ENCODE measurements at regions of chr10 and their contacts with region 1.

Region 1: GRCh38 chr10:86376852-86377796 is 10.5 kb upstream of the GRID1 start:
- DNase-seq: peak; percentile 64
- H3K4me3 ChIP-seq: no peak overlapping the region
- H3K27ac ChIP-seq: no peak overlapping the region
- H3K4me1 ChIP-seq: no peaks in the 10 kb centered on the region
- H3K27me3 ChIP-seq: peaks cover 10% of the 10 kb centered on the region
- CTCF ChIP-seq: peak; percentile 80

Region 2: GRCh38 chr10:84845624-84846261 is 1531.4 kb before region 1 on chr10:
- CTCF ChIA-PET with region 1: no interaction called
- POLR2A ChIA-PET with region 1: no interaction called
- intact Hi-C with region 1: loop called (anchors 5 kb)
- DNase-seq: peak; percentile 39
- H3K4me3 ChIP-seq: no peak overlapping the region
- H3K27ac ChIP-seq: no peak overlapping the region
- H3K4me1 ChIP-seq: no peaks in the 10 kb centered on the region
- H3K27me3 ChIP-seq: peaks cover 8% of the 10 kb centered on the region
- CTCF ChIP-seq: peak; percentile 51

Region 3: GRCh38 chr10:85548034-85548433 is 829.1 kb before region 1 on chr10:
- CTCF ChIA-PET with region 1: no interaction called
- POLR2A ChIA-PET with region 1: no interaction called
- intact Hi-C with region 1: loop called (anchors 5 kb)
- DNase-seq: peak; percentile 57
- H3K4me3 ChIP-seq: no peak overlapping the region
- H3K27ac ChIP-seq: no peak overlapping the region
- H3K4me1 ChIP-seq: no peaks in the 10 kb centered on the region
- H3K27me3 ChIP-seq: peaks cover 19% of the 10 kb centered on the region
- CTCF ChIP-seq: peak; percentile 46

Region 4: DNA sequence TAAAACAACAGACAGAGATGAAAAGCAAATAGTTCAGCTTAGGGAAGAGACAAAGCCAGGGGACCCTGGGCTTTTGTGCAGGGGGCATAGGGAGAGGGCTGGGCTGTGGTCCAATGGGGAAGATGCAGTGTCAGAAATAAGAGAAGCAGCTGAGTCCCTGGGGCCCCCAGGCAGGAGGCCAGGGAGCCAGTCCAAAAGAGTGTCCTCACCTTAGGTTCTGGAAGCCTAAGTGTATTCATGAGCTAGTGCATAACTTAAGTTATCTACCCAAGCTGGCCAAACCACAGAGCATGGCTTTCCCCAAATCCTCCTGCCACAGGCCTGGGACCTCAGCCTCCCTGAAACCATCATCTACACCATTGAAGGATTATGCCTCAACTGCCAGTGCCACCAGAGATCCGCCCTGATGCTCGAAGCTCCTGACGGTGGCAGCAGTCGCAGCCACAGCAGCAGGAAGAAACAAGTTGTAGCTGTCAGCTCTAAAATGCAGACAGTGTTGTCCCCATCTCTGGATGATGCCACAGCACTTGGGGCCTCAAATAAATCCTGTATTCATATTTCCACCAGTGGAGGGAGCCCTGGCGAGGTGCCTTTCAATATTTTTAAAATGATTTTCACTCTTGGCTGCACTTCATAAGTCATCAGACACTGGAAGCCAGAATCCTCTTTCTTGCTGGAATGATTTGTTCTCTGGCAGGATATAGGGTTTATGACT is 585.1 kb before region 1 on chr10:
- CTCF ChIA-PET with region 1: no interaction called
- POLR2A ChIA-PET with region 1: no interaction called
- intact Hi-C with region 1: loop called (anchors 10 kb)
- DNase-seq: peak; percentile 19
- H3K4me3 ChIP-seq: no peak overlapping the region
- H3K27ac ChIP-seq: no peak overlapping the region
- H3K4me1 ChIP-seq: no peaks in the 10 kb centered on the region
- H3K27me3 ChIP-seq: no peaks in the 10 kb centered on the region
- CTCF ChIP-seq: peak; percentile 40; the same call in 1 of the 2 replicates

Region 5: GRCh38 chr10:85995791-85996190 is 381.3 kb before region 1 on chr10:
- CTCF ChIA-PET with region 1: no interaction called
- POLR2A ChIA-PET with region 1: no interaction called
- intact Hi-C with region 1: loop called (anchors 2 kb)
- DNase-seq: peak; percentile 50
- H3K4me3 ChIP-seq: no peak overlapping the region
- H3K27ac ChIP-seq: no peak overlapping the region
- H3K4me1 ChIP-seq: no peaks in the 10 kb centered on the region
- H3K27me3 ChIP-seq: peaks cover 38% of the 10 kb centered on the region
- CTCF ChIP-seq: peak; percentile 62

Region 6: DNA sequence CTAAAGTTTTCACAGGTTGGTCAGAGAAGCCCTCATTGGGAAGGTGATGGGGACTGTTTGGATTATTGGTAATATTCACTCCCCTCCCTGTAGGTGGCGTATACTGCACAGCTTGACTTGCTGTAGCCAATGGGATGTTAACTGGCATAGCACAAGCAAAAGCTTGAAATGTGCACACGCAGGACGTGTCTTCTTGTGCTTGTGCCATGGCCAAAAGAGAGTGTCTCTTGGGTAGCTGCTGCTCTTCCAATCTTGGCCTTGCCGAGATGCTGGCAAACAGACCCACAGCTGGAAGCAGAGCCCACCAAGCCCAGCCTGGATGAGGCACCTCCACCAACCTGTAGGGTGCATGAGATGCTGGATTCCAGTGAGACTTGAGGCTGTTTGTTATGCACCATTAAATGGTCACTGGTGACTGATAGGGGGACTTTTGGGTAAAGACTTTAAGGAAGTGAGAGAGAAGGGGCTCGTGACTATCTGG is 276.5 kb before region 1 on chr10:
- CTCF ChIA-PET with region 1: no interaction called
- POLR2A ChIA-PET with region 1: no interaction called
- intact Hi-C with region 1: loop called (anchors 2 kb)
- DNase-seq: peak; percentile 55
- H3K4me3 ChIP-seq: no peak overlapping the region
- H3K27ac ChIP-seq: no peak overlapping the region
- H3K4me1 ChIP-seq: no peaks in the 10 kb centered on the region
- H3K27me3 ChIP-seq: peaks cover 5% of the 10 kb centered on the region
- CTCF ChIP-seq: peak; percentile 69

Region 7: DNA sequence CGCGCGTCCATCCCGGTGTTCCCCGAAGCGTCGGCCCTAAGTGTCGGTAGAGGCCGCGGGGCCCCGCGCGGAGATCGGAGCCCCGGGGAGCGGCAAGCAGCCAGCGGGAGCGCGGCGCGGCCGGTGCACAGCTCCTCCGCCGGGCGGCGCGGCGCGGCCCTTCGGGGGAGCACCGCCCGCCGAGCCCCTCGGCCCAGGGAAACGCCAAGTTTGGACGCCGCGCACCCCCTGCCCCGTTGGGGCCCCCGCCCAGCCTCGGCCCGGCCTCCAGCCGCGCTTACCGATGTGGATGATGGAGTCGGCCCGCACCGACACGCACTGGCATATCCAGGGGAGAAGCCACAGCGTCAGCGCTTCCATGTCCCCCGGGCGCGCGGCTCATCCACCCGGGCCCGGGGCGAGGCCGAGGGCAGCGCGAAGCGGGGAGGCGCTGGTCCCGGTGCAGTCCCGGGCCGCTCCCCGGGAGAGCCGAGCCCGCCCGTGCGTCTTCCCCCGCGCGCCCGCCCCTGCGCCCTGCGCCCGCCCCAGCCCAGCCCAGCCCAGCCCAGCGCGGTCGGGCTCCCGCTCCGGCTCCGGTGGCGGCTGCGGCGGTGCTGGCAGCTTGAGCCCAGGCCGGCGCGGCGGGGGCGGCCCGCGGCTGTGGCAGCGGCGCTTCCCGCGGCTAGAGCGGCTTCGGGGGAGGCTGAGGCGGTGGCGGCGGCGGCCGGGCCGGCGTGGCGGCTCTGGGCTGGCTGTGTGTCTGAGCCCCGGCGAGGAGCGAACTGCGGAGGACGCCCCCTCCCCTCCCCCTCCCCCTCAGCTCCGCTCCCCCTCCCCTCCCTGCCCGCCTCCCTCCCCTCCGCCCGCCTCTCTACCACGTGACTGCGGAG is 10.9 kb before region 1 on chr10 and contains the start of gene GRID1:
- CTCF ChIA-PET with region 1: no interaction called
- POLR2A ChIA-PET with region 1: no interaction called
- intact Hi-C with region 1: no loop called
- DNase-seq: peak; percentile 37
- H3K4me3 ChIP-seq: peak within 1 kb of the TSS; percentile 36
- H3K27ac ChIP-seq: no peak within 1 kb of the TSS
- H3K4me1 ChIP-seq: peaks cover 4% of the 10 kb centered on the region
- H3K27me3 ChIP-seq: peaks cover 63% of the 10 kb centered on the region
- CTCF ChIP-seq: no peak
- total RNA-seq, gene GRID1: not detected in 2 replicates